ENCODE measurements at regions of chr4 and their contacts with region 1.

Region 1: DNA sequence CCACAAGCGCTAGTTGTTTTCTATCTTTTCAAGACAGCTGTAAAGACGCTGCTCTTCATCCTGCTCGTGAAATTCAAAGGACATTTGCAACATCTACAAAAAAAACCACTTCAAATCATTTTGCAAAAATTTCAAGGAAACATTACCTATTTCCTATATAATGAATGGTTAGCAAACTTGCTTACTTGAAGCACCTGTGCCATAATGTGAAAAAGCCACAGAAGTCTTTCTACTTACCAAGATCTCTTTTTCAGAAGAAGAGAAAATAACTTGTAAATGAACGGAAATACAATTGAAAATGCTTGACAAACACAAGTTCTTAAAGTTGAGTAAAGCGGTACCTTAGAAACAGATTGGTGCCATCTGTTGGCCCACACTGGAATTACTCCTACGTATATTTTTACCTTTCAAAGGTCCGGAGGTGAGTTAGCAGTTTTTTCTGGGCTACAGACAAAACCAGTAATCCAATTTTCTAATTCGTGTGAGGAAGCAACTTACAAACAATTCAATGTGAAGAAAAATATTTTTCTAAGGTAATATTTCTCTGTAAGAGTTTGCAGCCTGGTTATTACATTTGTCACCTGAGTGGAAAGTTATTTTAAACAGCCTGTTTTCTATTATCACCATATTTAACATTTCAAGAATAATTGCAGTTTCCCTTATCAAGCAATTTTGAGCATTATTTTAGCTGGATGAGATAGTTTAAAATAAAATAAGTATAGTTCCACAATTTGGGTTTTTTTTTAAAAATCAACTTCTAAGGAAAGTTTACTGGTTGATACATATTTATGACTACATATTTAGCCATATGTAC is at the start of gene TLR6:
- DNase-seq: peak; percentile 70 to 81 (median 76)
- H3K4me3 ChIP-seq: peak within 1 kb of the TSS; percentile 4 to 43
- H3K4me3 Mint-ChIP-seq: peak within 1 kb of the TSS; percentile 74 to 87 (median 81)
- H3K27ac ChIP-seq: peak within 1 kb of the TSS; percentile 33
- H3K27ac Mint-ChIP-seq: peak within 1 kb of the TSS; percentile 80 to 93 (median 87)
- H3K4me1 ChIP-seq: peaks cover 30% of the 10 kb centered on the region
- H3K4me1 Mint-ChIP-seq: peaks cover 24 to 39% (median 31%) of the 10 kb centered on the region in 4 donors
- H3K27me3 ChIP-seq: no peaks in the 10 kb centered on the region
- H3K27me3 Mint-ChIP-seq: peaks cover 0 to 2% of the 10 kb centered on the region in 2 donors
- total RNA-seq, gene TLR6: 7.3 to 7.7 TPM

Region 2: DNA sequence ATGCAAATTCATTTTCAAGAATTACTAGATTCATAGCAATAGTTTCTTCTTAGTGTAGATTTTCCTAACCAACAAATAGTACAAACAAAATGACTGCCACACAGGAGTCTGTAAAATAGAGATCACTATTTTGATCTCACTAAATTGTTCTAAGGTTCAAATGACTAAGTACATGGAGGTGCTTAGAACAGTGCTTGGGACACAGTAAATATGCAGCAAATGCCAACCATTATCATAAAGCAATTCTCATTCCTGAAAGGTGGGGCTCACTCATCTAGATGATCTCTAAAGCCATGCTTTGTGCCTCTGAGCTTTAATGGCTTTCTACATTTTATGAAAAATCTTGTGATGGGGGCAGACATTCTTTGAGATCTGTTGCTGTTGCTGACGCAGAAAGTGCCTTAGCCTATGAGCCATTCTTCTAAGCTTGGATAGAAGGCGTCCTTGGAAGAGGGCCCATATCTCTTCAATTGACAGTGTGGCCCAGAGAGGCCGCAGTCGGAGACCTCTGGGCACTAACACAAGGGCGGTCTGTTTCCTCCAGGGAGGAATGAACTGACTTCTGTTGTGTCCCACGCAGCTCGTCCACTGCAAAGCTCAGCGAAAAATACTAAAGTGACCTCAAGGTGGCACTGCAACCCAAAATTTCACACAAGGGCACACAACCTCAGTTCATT is 97.5 kb before region 1 on chr4:
- CTCF ChIA-PET with region 1: interaction called, 230 read pairs
- POLR2A ChIA-PET with region 1: interaction called, 13 read pairs
- intact Hi-C with region 1: loop called (anchors 1 kb)
- DNase-seq: peak; percentile 44 to 63 (median 55)
- H3K4me3 ChIP-seq: no peak overlapping the region
- H3K4me3 Mint-ChIP-seq: peak overlapping the region in 1 of 8 donors; percentile 39
- H3K27ac ChIP-seq: no peak overlapping the region
- H3K27ac Mint-ChIP-seq: peak overlapping the region in 1 of 7 donors; percentile 56
- H3K4me1 ChIP-seq: peaks cover 5% of the 10 kb centered on the region
- H3K4me1 Mint-ChIP-seq: peaks cover 5 to 10% (median 6%) of the 10 kb centered on the region in 4 donors
- H3K27me3 ChIP-seq: no peaks in the 10 kb centered on the region
- H3K27me3 Mint-ChIP-seq: no peaks in the 10 kb centered on the region

Region 3: DNA sequence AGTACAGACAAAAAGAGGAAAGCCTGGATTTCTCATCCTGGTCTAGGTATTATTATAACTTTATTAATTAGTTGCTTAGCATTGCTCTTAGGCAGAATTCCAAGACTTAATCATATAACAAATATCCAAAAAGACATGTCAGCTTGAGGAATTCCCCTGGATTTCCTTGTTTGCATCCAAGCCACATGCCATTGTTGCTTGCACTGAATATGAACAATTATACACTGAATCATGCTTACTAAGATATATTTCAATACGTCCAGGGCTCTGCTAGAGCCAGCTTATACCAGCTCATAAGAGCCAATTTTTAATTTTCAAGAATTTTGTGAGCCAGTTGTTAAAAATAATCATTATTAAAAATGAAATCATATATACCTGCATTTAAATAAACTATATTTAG is 68.4 kb before region 1 on chr4:
- CTCF ChIA-PET with region 1: interaction called, 36 read pairs
- POLR2A ChIA-PET with region 1: no interaction called
- intact Hi-C with region 1: no loop called
- DNase-seq: no peak
- H3K4me3 ChIP-seq: no peak overlapping the region
- H3K4me3 Mint-ChIP-seq: no peak overlapping the region
- H3K27ac ChIP-seq: no peak overlapping the region
- H3K27ac Mint-ChIP-seq: no peak overlapping the region
- H3K4me1 ChIP-seq: no peaks in the 10 kb centered on the region
- H3K4me1 Mint-ChIP-seq: peaks cover 0 to 3% (median under 1%) of the 10 kb centered on the region in 4 donors
- H3K27me3 ChIP-seq: no peaks in the 10 kb centered on the region
- H3K27me3 Mint-ChIP-seq: no peaks in the 10 kb centered on the region

Region 4: DNA sequence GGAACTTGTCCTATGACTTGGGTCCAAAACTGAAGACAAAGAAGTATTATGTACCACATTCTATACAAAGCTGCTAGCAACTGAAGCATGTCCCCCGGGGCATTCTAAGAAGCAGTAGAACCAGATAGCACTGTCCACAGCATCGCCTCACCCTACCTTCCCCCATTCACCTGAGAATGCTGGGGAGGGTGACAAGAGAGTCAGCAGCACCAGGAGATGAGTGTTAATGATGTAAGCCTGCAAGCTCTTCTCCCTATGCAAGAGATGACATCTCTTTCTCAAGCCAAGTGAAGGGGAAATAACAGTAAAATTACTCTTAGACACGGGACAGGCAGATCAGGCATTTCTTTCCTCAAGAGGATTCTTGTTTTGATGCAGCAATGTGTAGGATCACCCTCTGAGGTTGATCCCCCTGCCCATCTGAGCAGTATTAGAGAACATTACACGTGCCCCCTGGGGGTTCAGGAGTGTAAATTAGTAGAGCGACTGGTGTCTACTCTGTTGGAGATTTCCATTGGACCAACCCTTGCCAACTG is 38.2 kb before region 1 on chr4:
- CTCF ChIA-PET with region 1: interaction called, 11 read pairs
- POLR2A ChIA-PET with region 1: interaction called, 4 read pairs
- intact Hi-C with region 1: no loop called
- DNase-seq: no peak
- H3K4me3 ChIP-seq: no peak overlapping the region
- H3K4me3 Mint-ChIP-seq: peak overlapping the region in 1 of 8 donors; percentile 25
- H3K27ac ChIP-seq: no peak overlapping the region
- H3K27ac Mint-ChIP-seq: no peak overlapping the region
- H3K4me1 ChIP-seq: peaks cover 17% of the 10 kb centered on the region
- H3K4me1 Mint-ChIP-seq: peaks cover 12 to 20% (median 16%) of the 10 kb centered on the region in 4 donors
- H3K27me3 ChIP-seq: no peaks in the 10 kb centered on the region
- H3K27me3 Mint-ChIP-seq: no peaks in the 10 kb centered on the region

Region 5: DNA sequence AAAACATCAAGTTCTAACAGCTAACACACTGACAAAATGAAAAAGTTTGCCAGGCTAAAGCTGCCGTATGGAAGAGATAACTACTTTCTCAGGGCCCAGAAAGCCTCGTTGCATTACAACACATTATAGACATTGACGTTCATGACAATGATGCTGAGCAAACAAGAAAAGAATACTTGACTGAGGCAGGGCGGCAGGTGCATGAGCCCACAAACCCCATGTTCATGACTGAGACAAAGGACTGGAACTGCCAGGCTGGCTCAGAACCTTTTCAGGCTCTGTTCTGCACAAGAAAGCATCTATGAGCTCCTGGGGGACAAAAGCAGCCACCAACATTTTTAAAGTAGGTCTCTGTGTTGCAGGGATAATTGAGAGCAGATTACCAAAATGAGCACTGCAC is 13.7 kb before region 1 on chr4:
- CTCF ChIA-PET with region 1: interaction called, 11 read pairs
- POLR2A ChIA-PET with region 1: interaction called, 7 read pairs
- intact Hi-C with region 1: loop called (anchors 1 kb)
- DNase-seq: no peak
- H3K4me3 ChIP-seq: no peak overlapping the region
- H3K4me3 Mint-ChIP-seq: no peak overlapping the region
- H3K27ac ChIP-seq: no peak overlapping the region
- H3K27ac Mint-ChIP-seq: no peak overlapping the region
- H3K4me1 ChIP-seq: peaks cover 8% of the 10 kb centered on the region
- H3K4me1 Mint-ChIP-seq: peaks cover 12 to 18% (median 13%) of the 10 kb centered on the region in 4 donors
- H3K27me3 ChIP-seq: no peaks in the 10 kb centered on the region
- H3K27me3 Mint-ChIP-seq: no peaks in the 10 kb centered on the region

Region 6: GRCh38 chr4:38889143-38889542 is 32.4 kb after region 1 on chr4:
- CTCF ChIA-PET with region 1: interaction called, 16 read pairs
- POLR2A ChIA-PET with region 1: no interaction called
- intact Hi-C with region 1: no loop called
- DNase-seq: peak in 1 of 5 donors; percentile 14
- H3K4me3 ChIP-seq: no peak overlapping the region
- H3K4me3 Mint-ChIP-seq: peak overlapping the region in 7 of 8 donors; percentile 17 to 69 (median 50)
- H3K27ac ChIP-seq: no peak overlapping the region
- H3K27ac Mint-ChIP-seq: peak overlapping the region in 3 of 7 donors; percentile 11 to 86 (median 26)
- H3K4me1 ChIP-seq: no peaks in the 10 kb centered on the region
- H3K4me1 Mint-ChIP-seq: peaks cover 7 to 10% (median 9%) of the 10 kb centered on the region in 4 donors
- H3K27me3 ChIP-seq: no peaks in the 10 kb centered on the region
- H3K27me3 Mint-ChIP-seq: no peaks in the 10 kb centered on the region

Region 7: DNA sequence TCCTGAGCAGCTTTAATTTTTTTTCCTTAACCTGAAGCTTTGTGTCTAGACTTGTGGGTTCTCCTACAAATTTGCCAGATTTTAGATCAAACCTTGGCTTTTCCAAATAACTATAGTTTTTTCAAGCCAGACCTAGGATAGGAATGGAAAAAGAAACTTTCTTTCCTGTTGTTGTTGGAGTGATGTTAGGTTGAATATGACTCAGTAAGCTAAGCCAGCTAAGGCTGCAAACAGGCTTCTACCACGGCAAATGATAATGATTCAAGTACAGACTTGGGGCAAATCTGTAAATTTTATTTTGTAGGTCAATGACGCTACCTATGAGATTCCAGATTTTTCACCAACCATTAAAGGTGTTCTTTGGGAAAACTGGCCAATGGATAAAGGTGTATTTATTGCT is 371.2 kb after region 1 on chr4:
- CTCF ChIA-PET with region 1: no interaction called
- POLR2A ChIA-PET with region 1: no interaction called
- intact Hi-C with region 1: no loop called
- DNase-seq: no peak
- H3K4me3 ChIP-seq: no peak overlapping the region
- H3K4me3 Mint-ChIP-seq: no peak overlapping the region
- H3K27ac ChIP-seq: no peak overlapping the region
- H3K27ac Mint-ChIP-seq: no peak overlapping the region
- H3K4me1 ChIP-seq: no peaks in the 10 kb centered on the region
- H3K4me1 Mint-ChIP-seq: no peaks in the 10 kb centered on the region
- H3K27me3 ChIP-seq: no peaks in the 10 kb centered on the region
- H3K27me3 Mint-ChIP-seq: no peaks in the 10 kb centered on the region